ENCODE measurements at regions of chr2 and their contacts with region 1.

Region 1: DNA sequence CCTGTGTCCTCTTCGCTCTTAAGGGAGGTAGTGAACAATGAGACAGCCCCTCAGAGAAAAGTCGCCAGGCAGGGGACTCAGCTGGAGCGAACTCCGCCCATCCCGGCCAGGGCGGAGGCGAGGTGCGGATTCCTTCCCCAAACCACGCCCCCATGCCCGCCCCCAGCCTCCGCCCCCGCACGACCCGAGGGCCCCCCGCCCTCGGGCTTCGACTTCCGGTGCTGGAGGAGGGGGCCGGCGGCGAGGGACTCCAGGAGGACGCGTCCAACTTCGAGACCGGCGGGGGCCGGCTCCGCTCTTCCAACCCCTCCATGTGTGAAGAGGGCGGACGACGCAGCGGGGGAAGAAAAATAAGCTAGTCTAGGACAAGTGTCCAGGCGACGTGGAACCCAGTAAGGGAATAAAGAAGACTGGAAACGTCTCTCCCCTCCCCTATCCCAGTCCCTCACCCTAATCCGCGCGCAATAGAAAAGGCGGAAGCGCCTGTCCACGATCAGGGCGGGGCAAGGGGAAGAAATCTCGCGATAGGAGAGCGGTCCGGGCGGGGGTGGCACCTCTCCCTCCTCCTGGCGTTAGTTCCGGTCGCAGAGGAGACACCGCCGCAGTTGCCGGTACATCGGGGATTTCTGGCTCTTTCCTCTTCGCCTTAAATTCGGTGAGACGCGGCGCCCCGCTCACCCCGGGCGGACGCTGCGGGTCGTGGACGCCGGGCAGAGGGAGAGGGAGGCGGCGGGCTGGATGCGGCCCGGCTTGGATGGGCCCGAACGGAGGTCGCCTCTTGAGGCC is at the start of gene BZW1:
- DNase-seq: peak; percentile 96
- ATAC-seq: peak; percentile 86
- H3K4me3 ChIP-seq: peak within 1 kb of the TSS; percentile 91
- H3K27ac ChIP-seq: peak within 1 kb of the TSS; percentile 96
- H3K4me1 ChIP-seq: peaks cover 10% of the 10 kb centered on the region
- H3K27me3 ChIP-seq: no peaks in the 10 kb centered on the region
- CTCF ChIP-seq: no peak
- POLR2A ChIP-seq: peak; percentile 98
- RAD21 ChIP-seq: no peak; the same call in 1 of the 2 replicates
- total RNA-seq, gene BZW1: 268 and 323 TPM in 2 replicates

Region 2: GRCh38 chr2:200618587-200619021 is 192.9 kb before region 1 on chr2:
- CTCF ChIA-PET with region 1: no interaction called
- POLR2A ChIA-PET with region 1: no interaction called
- dilution Hi-C with region 1: no loop called
- in situ Hi-C with region 1: no loop called
- intact Hi-C with region 1: loop called (anchors 10 kb)
- DNase-seq: peak; percentile 78
- ATAC-seq: peak; percentile 73
- H3K4me3 ChIP-seq: no peak overlapping the region
- H3K27ac ChIP-seq: no peak overlapping the region; the same call in 1 of the 2 replicates
- H3K4me1 ChIP-seq: peaks cover 20% of the 10 kb centered on the region
- H3K27me3 ChIP-seq: no peaks in the 10 kb centered on the region
- CTCF ChIP-seq: peak; percentile 53
- POLR2A ChIP-seq: no peak
- RAD21 ChIP-seq: peak; percentile 53

Region 3: GRCh38 chr2:200713003-200713703 is 98.4 kb before region 1 on chr2:
- CTCF ChIA-PET with region 1: interaction called, 4 read pairs
- POLR2A ChIA-PET with region 1: no interaction called
- dilution Hi-C with region 1: no loop called
- in situ Hi-C with region 1: no loop called
- intact Hi-C with region 1: loop called (anchors 1 kb)
- DNase-seq: peak; percentile 95
- ATAC-seq: peak; percentile 98
- H3K4me3 ChIP-seq: peak overlapping the region; percentile 23
- H3K27ac ChIP-seq: peak overlapping the region; percentile 33
- H3K4me1 ChIP-seq: peaks cover 4% of the 10 kb centered on the region
- H3K27me3 ChIP-seq: peaks cover under 1% of the 10 kb centered on the region; the same call in 1 of the 2 replicates
- CTCF ChIP-seq: peak; percentile 94
- POLR2A ChIP-seq: peak; percentile 70; the same call in 1 of the 2 replicates
- RAD21 ChIP-seq: peak; percentile 96

Region 4: DNA sequence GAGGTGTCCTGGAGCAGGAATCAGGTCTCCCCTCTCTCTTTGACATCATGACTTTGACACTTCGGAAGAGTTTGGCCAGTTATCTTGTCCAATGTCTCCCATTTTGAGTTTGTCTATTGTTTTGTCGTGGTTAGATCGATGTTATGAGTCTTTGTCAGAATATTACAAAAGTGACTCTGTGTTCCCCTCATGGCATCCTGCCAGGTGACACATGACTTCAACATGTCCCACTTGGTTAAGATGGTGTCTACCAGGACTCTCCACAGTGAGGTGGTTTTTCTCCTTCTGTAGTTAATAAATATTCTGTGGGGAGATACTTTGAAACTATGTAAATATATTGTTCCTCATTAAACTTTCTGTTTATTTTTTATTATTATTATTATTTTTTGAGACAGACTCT is 76.5 kb before region 1 on chr2:
- CTCF ChIA-PET with region 1: interaction called, 3 read pairs
- POLR2A ChIA-PET with region 1: no interaction called
- dilution Hi-C with region 1: no loop called
- in situ Hi-C with region 1: no loop called
- intact Hi-C with region 1: loop called (anchors 1 kb)
- DNase-seq: no peak
- ATAC-seq: no peak
- H3K4me3 ChIP-seq: no peak overlapping the region
- H3K27ac ChIP-seq: no peak overlapping the region
- H3K4me1 ChIP-seq: peaks cover 5% of the 10 kb centered on the region
- H3K27me3 ChIP-seq: 0 out of 2 replicates have a peak, but pooled peaks cover 2% of the 10 kb centered on the region
- CTCF ChIP-seq: no peak
- POLR2A ChIP-seq: no peak
- RAD21 ChIP-seq: no peak

Region 5: DNA sequence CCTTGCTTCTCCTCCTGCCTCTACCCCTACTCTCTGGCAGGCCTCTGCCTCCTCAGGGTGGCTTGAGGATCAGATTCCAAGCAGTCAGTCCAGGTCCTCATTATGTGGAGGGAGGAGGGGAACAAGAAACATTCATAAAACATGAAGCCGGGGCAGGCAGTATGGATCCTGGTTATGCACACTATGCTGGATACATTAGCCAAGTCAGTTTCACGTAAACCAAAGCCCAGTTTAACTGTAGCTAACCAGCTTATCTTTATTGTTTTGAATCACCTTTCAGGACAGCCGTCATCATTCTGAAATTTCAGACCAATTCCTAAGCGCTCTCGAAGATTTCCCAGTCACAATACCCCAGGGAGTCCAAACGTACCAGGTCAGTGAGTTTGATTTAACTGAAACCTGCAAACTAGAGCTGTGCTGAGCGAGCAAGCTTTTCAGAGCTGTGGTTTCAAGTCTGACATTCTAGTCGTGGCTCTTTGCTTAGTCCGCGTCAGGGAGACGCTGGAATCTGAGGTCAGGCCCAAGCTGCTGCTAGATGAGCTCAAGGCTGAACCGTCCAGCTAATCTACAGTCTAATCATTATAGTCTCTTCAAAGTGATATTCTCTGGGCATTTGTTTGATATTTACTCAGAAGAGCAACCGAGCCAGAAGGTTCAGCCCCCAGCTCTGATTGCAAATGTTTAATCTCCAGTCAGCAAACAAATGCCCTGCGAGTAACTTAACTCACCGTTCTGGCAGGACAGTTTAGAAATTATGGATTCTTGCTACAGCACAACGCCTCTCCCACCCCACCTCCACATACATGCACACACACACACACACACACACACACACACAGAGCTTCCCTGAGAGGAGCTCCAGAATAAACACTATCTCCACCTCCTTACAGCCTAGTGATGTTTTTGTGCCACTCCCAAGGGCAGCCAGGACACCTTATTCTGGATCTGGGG is 63.6 kb before region 1 on chr2:
- CTCF ChIA-PET with region 1: no interaction called
- POLR2A ChIA-PET with region 1: no interaction called
- dilution Hi-C with region 1: no loop called
- in situ Hi-C with region 1: loop called (anchors 5 kb)
- intact Hi-C with region 1: loop called (anchors 2 kb)
- DNase-seq: peak; percentile 97
- ATAC-seq: peak; percentile 96
- H3K4me3 ChIP-seq: peak overlapping the region; percentile 18; the same call in 1 of the 2 replicates
- H3K27ac ChIP-seq: peak overlapping the region; percentile 84
- H3K4me1 ChIP-seq: peaks cover 23% of the 10 kb centered on the region
- H3K27me3 ChIP-seq: no peaks in the 10 kb centered on the region
- CTCF ChIP-seq: no peak
- POLR2A ChIP-seq: 0 out of 2 replicates have a peak, but pooled peaks have one; percentile 10
- RAD21 ChIP-seq: peak; percentile 29

Region 6: GRCh38 chr2:200787348-200788120 is 24.0 kb before region 1 on chr2:
- CTCF ChIA-PET with region 1: no interaction called
- POLR2A ChIA-PET with region 1: no interaction called
- dilution Hi-C with region 1: no loop called
- in situ Hi-C with region 1: no loop called
- intact Hi-C with region 1: loop called (anchors 2 kb)
- DNase-seq: peak; percentile 98
- ATAC-seq: peak; percentile 74
- H3K4me3 ChIP-seq: no peak overlapping the region; the same call in 1 of the 2 replicates
- H3K27ac ChIP-seq: peak overlapping the region; percentile 88
- H3K4me1 ChIP-seq: peaks cover 10% of the 10 kb centered on the region
- H3K27me3 ChIP-seq: no peaks in the 10 kb centered on the region
- CTCF ChIP-seq: no peak
- POLR2A ChIP-seq: peak; percentile 65
- RAD21 ChIP-seq: no peak

Region 7: GRCh38 chr2:200795044-200795443 is 16.5 kb before region 1 on chr2:
- CTCF ChIA-PET with region 1: no interaction called
- POLR2A ChIA-PET with region 1: no interaction called
- dilution Hi-C with region 1: no loop called
- in situ Hi-C with region 1: no loop called
- intact Hi-C with region 1: loop called (anchors 2 kb)
- DNase-seq: no peak
- ATAC-seq: no peak
- H3K4me3 ChIP-seq: no peak overlapping the region
- H3K27ac ChIP-seq: no peak overlapping the region
- H3K4me1 ChIP-seq: peaks cover 5% of the 10 kb centered on the region
- H3K27me3 ChIP-seq: no peaks in the 10 kb centered on the region
- CTCF ChIP-seq: no peak
- POLR2A ChIP-seq: no peak
- RAD21 ChIP-seq: no peak

Measured in IMR-90 (cell line).